ENCODE measurements at regions of chr7 and their contacts with region 1.

Region 1: DNA sequence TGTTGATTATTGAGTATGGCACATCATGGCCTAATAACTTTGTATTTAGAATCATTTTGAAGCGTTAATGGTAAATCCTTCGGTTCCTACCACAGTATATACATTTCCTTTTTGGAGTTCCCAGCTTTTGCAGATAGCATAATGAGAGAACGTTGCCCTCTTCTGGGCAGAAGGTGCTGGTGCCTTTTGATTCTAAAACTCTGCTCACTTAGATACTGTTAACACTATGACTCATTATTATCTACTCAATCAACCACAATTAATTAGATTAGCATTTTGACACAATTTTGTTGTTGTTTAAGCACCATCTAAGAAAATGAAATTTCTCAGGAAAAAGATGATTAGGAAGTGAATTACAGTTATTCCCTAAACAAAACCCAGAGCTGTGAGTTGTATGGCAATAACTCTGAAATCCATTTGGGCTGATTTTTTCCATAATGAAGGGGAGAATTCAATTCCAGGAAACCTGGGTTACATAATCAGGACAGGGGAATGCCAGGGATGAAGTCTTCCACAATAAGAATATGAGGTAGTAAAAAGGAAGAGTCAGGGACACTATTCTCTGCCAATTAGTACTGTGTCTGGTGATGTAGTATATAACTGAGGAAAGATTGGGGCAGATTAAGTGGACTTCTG is 11.5 kb upstream of the DLD start:
- DNase-seq: no peak
- ATAC-seq: peak; percentile 79
- H3K4me3 Mint-ChIP-seq: no peak overlapping the region
- H3K27ac Mint-ChIP-seq: no peak overlapping the region
- H3K4me1 Mint-ChIP-seq: no peaks in the 10 kb centered on the region; the same call in 1 of the 2 replicates
- H3K27me3 Mint-ChIP-seq: peaks cover 4% of the 10 kb centered on the region; the same call in 1 of the 2 replicates
- CTCF ChIP-seq: peak; percentile 38; the same call in 1 of the 2 replicates

Region 2: GRCh38 chr7:107462740-107463444 is 416.6 kb before region 1 on chr7:
- CTCF ChIA-PET with region 1: interaction called, 17 read pairs
- POLR2A ChIA-PET with region 1: no interaction called
- DNase-seq: peak; percentile 52
- ATAC-seq: peak; percentile 95
- H3K4me3 Mint-ChIP-seq: no peak overlapping the region
- H3K27ac Mint-ChIP-seq: no peak overlapping the region
- H3K4me1 Mint-ChIP-seq: peaks cover 16% of the 10 kb centered on the region
- H3K27me3 Mint-ChIP-seq: no peaks in the 10 kb centered on the region
- CTCF ChIP-seq: peak; percentile 32; the same call in 1 of the 2 replicates

Region 3: DNA sequence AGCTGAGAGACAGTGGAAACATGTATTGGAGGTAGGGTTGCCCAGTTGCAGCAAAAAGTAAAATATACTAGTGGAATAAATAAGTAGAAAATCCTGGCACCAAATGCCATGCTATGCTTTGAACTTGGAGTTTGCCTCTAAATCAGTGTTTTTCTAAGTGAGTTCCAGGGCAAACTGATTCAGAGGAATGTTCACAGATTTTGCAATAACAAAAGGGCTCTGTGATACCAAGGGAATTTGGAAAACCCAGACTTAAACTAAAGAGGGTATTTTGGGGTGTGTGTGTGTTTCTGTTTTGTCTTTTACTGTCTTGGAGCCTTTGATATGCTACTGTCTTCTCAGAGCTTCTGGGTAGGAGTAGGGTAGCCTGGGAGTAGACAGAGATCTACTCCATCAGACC is 178.9 kb before region 1 on chr7:
- CTCF ChIA-PET with region 1: no interaction called
- POLR2A ChIA-PET with region 1: no interaction called
- DNase-seq: no peak
- ATAC-seq: no peak
- H3K4me3 Mint-ChIP-seq: no peak overlapping the region
- H3K27ac Mint-ChIP-seq: no peak overlapping the region
- H3K4me1 Mint-ChIP-seq: peaks cover 7% of the 10 kb centered on the region
- H3K27me3 Mint-ChIP-seq: no peaks in the 10 kb centered on the region
- CTCF ChIP-seq: no peak

Region 4: DNA sequence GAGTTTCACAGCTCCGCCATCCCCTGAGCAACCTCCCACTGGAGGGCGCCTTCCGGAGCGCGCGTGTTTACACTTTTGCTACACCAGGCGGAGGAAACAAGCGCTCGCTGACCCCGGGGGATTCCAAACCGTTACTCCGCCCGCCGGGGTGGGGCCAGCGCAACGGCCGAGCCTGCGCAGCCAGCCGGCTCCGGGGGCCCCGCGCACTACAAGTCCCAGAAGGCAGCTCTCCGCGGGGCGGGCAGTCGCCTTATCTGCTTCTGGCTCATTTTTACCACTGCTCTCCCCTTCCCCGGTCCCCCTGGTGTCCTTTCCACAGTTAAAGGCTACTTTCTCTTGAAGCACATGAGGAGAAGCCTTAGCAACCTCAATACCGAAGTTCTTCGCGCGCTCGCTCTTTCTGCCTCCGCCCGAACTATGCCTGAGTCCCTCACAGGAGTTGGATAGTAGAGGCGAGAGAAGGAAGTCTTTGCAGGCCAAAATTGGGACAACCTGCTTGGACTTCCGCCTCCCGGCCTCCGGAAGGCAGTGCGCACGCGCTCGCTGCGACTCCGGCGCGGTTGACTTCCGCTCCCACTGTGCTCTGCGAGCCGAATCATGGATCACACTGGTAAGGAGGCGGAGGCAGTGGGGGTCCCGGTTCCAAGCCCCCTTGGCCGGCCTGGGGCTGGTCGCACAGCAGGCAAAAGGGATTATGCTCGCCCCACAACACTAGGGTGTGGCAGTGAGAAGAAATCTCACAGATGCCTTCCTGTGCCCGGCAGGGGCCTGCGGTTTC is 135.8 kb before region 1 on chr7 and contains the start of gene CBLL1:
- CTCF ChIA-PET with region 1: interaction called, 20 read pairs
- POLR2A ChIA-PET with region 1: interaction called, 5 read pairs
- DNase-seq: peak; percentile 95
- ATAC-seq: peak; percentile 92
- H3K4me3 Mint-ChIP-seq: peak within 1 kb of the TSS; percentile 100
- H3K27ac Mint-ChIP-seq: peak within 1 kb of the TSS; percentile 100
- H3K4me1 Mint-ChIP-seq: peaks cover 24% of the 10 kb centered on the region
- H3K27me3 Mint-ChIP-seq: no peaks in the 10 kb centered on the region
- CTCF ChIP-seq: no peak
- total RNA-seq, gene CBLL1: 26.1 to 29.8 TPM (median 26.3 TPM) in 3 replicates

Region 5: DNA sequence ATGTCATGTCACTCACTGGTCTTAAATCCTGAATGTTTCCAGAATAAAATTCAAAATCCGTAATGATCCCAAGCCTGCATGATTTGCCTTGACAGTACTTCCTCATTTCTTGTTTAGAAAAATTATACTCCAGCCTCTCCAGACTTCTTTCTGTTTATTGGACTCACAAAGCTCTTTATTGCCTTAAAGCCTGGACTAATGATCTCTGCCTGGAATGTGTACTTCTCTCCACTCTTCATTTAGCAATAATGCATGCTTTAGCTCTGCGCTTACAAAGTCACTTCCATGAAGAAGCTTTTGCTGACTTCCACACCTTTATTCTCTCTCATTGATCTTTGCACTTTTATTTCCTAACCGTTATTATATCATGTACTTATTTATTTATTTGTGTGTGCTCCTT is 49.1 kb before region 1 on chr7:
- CTCF ChIA-PET with region 1: no interaction called
- POLR2A ChIA-PET with region 1: no interaction called
- DNase-seq: no peak
- ATAC-seq: no peak
- H3K4me3 Mint-ChIP-seq: no peak overlapping the region
- H3K27ac Mint-ChIP-seq: no peak overlapping the region
- H3K4me1 Mint-ChIP-seq: no peaks in the 10 kb centered on the region
- H3K27me3 Mint-ChIP-seq: no peaks in the 10 kb centered on the region; the same call in 1 of the 2 replicates
- CTCF ChIP-seq: no peak

Region 6: DNA sequence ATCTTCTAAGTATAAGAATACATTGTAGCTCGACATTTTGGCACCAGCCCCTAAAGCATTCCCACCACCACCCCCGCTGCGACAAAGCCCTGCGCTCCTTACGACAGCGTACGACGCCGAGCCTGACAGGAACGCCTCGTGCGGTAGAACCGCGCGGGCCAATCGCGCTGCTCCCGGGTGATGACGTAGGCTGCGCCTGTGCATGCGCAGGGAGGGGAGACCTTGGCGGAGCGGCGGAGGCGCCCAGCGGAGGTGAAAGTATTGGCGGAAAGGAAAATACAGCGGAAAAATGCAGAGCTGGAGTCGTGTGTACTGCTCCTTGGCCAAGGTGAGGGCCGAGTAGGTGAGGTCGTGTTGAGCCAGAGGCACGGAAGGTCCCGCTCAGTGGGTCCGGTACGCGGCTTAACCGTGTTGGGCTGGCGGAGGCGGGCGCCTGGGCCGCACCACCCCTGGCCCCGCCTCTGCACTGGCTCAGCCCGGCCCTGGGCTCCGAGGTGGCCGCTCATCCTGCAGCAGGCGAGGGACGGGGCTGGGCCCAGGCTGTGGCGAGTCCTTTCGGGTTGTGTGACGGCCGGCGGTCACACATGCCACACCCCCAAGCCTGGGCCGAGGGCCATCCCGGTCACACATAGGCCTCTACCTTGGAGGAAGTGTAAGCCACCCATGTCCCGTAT is 11.6 kb after region 1 on chr7 and contains the start of gene DLD:
- CTCF ChIA-PET with region 1: interaction called, 11 read pairs
- POLR2A ChIA-PET with region 1: no interaction called
- DNase-seq: peak; percentile 94
- ATAC-seq: peak; percentile 97
- H3K4me3 Mint-ChIP-seq: peak within 1 kb of the TSS; percentile 92
- H3K27ac Mint-ChIP-seq: peak within 1 kb of the TSS; percentile 96
- H3K4me1 Mint-ChIP-seq: peaks cover 15% of the 10 kb centered on the region
- H3K27me3 Mint-ChIP-seq: peaks cover 2% of the 10 kb centered on the region; the same call in 1 of the 2 replicates
- CTCF ChIP-seq: no peak
- total RNA-seq, gene DLD: 72.1 to 79.9 TPM (median 75.6 TPM) in 3 replicates

Measured in WTC11 (cell line).